BJ (cell line): ENCODE measurements at regions of chr11 and their contacts with region 1.

Region 1: DNA sequence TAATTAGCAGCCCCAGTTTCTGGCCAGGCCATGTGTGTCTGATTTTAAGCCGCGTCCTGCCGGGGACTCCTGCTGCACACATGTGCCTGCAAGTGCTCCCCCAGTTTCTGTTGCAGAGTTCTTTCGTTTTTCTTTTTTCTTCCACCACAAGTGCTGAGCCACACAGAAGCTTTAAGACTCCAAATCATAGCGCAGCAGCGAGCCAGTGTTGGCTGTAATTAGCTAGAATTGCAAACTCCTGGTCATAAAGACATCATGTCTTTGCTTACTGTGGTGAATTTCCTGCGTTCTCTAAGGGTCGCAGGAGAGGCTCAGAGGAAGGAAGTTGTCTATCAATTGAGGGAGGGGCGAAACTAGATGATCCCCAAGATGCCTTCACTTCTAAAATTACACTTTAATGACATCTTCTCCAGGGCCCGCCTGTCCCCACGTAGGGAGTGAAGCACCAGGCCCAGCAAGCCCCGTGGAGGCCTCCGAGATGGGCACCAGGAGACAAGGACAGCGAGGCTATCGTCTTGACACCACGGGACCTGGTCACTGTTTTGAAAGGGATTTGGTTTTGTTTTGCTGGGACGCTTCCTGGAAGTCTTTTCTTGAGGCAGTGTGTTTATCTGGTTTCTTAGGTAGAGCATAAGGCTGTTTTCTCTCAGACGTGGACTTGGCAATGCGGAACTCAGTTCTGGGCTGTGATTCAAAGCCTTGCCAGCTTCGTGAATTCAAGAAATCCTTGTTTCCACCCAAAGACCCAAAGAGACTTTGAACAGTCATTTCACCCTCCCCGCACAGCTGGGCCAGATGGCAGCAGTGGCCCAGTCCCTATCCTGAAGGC is 71.8 kb downstream of the UBASH3B start:
- DNase-seq: no peak
- H3K4me3 ChIP-seq: no peak overlapping the region
- H3K27me3 ChIP-seq: no peaks in the 10 kb centered on the region
- CTCF ChIP-seq: no peak

Region 2: GRCh38 chr11:122424636-122425035 is 302.7 kb before region 1 on chr11:
- CTCF ChIA-PET with region 1: no interaction called
- POLR2A ChIA-PET with region 1: no interaction called
- DNase-seq: no peak
- H3K4me3 ChIP-seq: no peak overlapping the region
- H3K27me3 ChIP-seq: peaks cover 6% of the 10 kb centered on the region
- CTCF ChIP-seq: no peak

Region 3: GRCh38 chr11:122737674-122738321 is 10.5 kb after region 1 on chr11:
- CTCF ChIA-PET with region 1: interaction called, 11 read pairs
- POLR2A ChIA-PET with region 1: no interaction called
- DNase-seq: no peak
- H3K4me3 ChIP-seq: no peak overlapping the region
- H3K27me3 ChIP-seq: no peaks in the 10 kb centered on the region
- CTCF ChIP-seq: no peak